ENCODE measurements at regions of chr2 and their contacts with region 1.

Region 1: GRCh38 chr2:127387655-127388422 is at the start of gene MAP3K2:
- DNase-seq: peak; percentile 72 to 91 (median 84)
- H3K4me3 ChIP-seq: peak within 1 kb of the TSS; percentile 69 to 100 (median 93)
- H3K27ac ChIP-seq: peak within 1 kb of the TSS; percentile 81 to 100 (median 100)
- H3K27me3 ChIP-seq: no peaks in the 10 kb centered on the region
- CTCF ChIP-seq: peak in 7 of 56 donors; percentile 4 to 18 (median 13)
- total RNA-seq, gene MAP3K2: 36.0 to 66.7 (median 51.9) TPM

Region 2: GRCh38 chr2:127408004-127408806 is 20.4 kb after region 1 on chr2:
- intact Hi-C with region 1: loop called (anchors 1 to 2 kb)
- DNase-seq: peak; percentile 70 to 95 (median 83)
- H3K4me3 ChIP-seq: peak overlapping the region; percentile 37 to 72 (median 60)
- H3K27ac ChIP-seq: peak overlapping the region; percentile 49 to 97 (median 92)
- H3K27me3 ChIP-seq: no peaks in the 10 kb centered on the region
- CTCF ChIP-seq: peak in 3 of 56 donors; percentile 5 to 40 (median 23)

Region 3: GRCh38 chr2:127516031-127516762 is 128.4 kb after region 1 on chr2:
- intact Hi-C with region 1: loop called (anchors 5 to 10 kb)
- DNase-seq: peak; percentile 12 to 85 (median 77)
- H3K4me3 ChIP-seq: peak overlapping the region in 4 of 59 donors; percentile 3 to 52 (median 24)
- H3K27ac ChIP-seq: peak overlapping the region in 58 of 59 donors; percentile 41 to 97 (median 89)
- H3K27me3 ChIP-seq: no peaks in the 10 kb centered on the region
- CTCF ChIP-seq: no peak